Activated CD8-positive, alpha-beta T cell treated with anti-CD3 and anti-CD28 coated beads for 36 hours (primary cell): ENCODE measurements at regions of chr20 and their contacts with region 1.

Region 1: DNA sequence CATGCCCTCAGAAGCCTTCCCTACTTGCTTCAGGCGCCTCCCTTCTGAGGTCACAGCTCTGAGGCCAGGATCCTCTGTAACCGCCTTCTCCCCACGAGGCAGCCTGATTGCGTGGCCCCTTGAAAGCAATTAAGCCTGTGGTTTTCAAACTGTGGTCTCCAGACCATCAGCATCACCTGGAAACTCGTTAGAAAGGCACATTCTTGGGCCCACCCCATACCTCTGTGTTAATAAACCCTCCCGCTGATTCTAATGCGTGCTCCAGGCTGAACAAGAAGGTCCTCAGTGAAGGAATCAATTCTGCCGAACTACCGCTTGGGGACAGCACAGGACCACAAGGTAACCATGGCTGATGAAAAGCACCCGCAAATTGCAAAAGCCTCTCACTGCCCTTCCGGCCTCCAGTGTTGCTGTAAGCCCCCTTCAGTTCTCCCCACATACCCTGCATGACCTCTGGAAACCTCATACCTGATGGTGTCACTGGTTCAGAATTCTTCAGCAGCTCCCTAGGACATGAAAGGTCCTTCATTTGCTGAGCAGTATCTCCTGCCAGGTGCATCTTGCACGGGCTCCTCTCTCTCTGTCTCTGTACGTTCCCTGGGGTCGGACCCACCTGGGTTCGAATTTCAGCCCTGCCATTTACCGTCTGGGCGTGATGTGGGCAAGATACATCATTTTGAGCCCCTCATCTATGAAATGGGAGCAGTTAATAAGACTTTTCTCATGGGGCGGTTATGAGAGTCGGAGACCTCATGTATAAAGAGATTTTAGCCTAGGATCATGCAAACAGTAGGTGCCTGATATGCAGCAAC is 93.3 kb upstream of the RNF24 start:
- DNase-seq: peak; percentile 83
- ATAC-seq: peak; percentile 93
- H3K4me3 Mint-ChIP-seq: peak overlapping the region; percentile 20
- H3K27ac Mint-ChIP-seq: peak overlapping the region; percentile 80
- H3K4me1 Mint-ChIP-seq: peaks cover 25% of the 10 kb centered on the region
- H3K27me3 Mint-ChIP-seq: peaks cover 5% of the 10 kb centered on the region
- CTCF ChIP-seq: peak; percentile 91

Region 2: GRCh38 chr20:4152006-4152695 is 43.5 kb after region 1 on chr20:
- CTCF ChIA-PET with region 1: interaction called, 3 read pairs
- POLR2A ChIA-PET with region 1: no interaction called
- intact Hi-C with region 1: loop called (anchors 5 kb)
- DNase-seq: no peak
- ATAC-seq: no peak
- H3K4me3 Mint-ChIP-seq: no peak overlapping the region
- H3K27ac Mint-ChIP-seq: no peak overlapping the region
- H3K4me1 Mint-ChIP-seq: peaks cover 4% of the 10 kb centered on the region
- H3K27me3 Mint-ChIP-seq: peaks cover 37% of the 10 kb centered on the region
- CTCF ChIP-seq: no peak

Region 3: DNA sequence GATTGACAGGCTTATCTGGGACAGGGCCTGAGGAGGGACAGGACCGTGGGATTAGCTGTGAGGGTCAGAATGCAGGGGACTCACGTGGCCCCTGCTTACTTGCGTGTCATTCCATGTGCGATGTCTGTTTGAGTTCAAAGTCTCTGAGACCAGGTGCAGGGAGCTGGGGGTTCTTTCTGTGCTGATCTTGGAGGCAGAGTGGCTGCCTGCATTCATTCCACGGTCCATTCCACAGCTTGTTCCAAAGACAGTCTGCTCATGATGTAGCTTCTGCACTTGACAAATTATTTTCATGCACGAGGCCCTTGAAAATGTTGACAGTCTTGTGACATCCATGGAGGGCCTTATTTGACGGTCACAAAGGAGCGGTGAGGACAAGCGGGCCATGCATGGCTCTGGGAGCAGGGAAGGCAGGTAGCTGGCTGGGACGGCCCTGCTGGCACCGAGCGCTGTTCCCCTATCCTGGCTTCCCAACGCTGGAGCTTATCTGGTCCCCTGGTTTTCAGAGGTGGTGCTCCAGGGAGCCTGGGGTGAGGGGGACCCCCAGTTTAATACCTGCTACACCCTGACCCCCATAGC is 62.9 kb after region 1 on chr20:
- CTCF ChIA-PET with region 1: interaction called, 4 read pairs
- POLR2A ChIA-PET with region 1: interaction called, 3 read pairs
- intact Hi-C with region 1: loop called (anchors 1 kb)
- DNase-seq: no peak
- ATAC-seq: no peak
- H3K4me3 Mint-ChIP-seq: peak overlapping the region; percentile 77
- H3K27ac Mint-ChIP-seq: peak overlapping the region; percentile 62
- H3K4me1 Mint-ChIP-seq: peaks cover 31% of the 10 kb centered on the region
- H3K27me3 Mint-ChIP-seq: no peaks in the 10 kb centered on the region
- CTCF ChIP-seq: no peak

Region 4: DNA sequence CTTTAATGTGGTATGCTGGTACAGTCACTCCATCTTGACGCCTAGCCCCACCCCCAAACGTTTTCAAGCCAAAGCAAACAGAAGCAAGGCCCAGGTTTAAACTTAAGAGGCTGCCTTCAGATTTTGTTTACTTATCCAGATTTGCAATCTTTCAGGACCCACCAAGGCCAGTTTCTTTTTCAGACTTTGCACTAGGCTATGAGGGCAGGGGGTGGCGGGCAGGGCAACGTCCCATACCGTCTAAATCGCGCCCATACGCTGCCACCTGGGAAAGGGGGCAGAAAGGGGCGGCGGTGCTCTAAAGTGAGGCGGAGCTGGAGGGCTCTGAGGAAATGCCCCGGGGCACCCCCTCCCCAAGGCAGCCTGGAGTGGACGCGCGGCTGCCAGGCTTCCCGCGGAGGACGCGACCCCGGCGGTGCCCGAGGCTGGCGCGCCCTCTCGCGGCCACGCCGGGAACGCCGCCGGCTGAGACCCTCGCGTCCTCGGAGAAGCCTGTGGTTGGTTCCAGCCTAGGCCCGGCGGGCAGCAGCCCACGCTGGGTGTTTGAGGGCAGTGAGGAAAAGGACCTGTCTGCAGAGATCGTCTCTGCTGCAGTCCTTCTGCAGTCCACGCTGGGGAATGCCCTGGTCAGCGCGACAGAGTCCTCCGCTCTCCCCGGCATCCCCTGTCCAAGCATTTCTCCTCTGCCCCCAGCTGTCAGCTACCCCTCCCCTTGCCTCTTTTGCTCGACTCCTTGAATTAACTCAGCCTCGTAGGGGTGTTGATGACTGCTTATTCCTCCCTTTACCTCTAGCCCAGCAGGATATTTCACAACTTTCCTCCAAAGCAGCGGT is 483.8 kb after region 1 on chr20:
- CTCF ChIA-PET with region 1: interaction called, 4 read pairs
- POLR2A ChIA-PET with region 1: no interaction called
- intact Hi-C with region 1: loop called (anchors 5 kb)
- DNase-seq: peak; percentile 58
- ATAC-seq: peak; percentile 93
- H3K4me3 Mint-ChIP-seq: peak overlapping the region; percentile 46
- H3K27ac Mint-ChIP-seq: no peak overlapping the region
- H3K4me1 Mint-ChIP-seq: peaks cover 8% of the 10 kb centered on the region
- H3K27me3 Mint-ChIP-seq: peaks cover 7% of the 10 kb centered on the region
- CTCF ChIP-seq: peak; percentile 98